GM23248 (cell line): ENCODE measurements at regions of chr1 and their contacts with region 1.

Region 1: DNA sequence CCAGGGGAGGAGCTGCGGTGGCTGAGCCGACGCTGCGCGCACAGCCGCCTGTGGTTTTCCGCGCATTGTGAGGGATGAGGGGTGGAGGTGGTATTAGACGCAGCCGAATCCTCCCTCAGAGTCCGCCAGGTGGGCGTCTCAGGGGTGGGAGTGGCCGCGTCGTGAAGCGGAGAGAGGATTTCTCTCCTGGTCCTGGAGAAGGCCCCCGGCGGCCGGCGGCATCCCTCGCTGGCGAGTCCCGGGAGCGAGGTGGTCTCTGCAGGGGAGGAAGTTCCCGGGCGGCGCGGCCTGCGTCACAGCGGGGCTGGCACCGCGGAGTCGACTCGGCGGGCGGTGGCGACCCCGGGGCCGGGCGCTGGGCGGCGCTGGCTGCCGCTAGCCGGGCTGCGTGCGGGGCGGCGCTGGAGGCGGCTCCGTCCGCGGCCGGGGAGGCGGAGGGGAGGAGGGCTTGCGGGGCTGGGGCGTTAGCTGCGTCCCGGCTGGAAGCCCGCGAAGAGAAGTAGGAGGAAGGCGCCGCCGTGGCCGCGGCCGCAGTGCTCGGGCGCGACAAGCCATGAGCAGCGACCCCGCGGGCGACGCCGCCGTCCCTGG is at the start of gene LRRC8C:
- DNase-seq: peak; percentile 91
- H3K4me3 ChIP-seq: peak within 1 kb of the TSS; percentile 90
- H3K27ac ChIP-seq: peak within 1 kb of the TSS; percentile 21
- H3K4me1 ChIP-seq: peaks cover 32% of the 10 kb centered on the region
- H3K27me3 ChIP-seq: no peaks in the 10 kb centered on the region
- total RNA-seq, gene LRRC8C: 5.7 and 7.3 TPM in 2 replicates

Region 2: DNA sequence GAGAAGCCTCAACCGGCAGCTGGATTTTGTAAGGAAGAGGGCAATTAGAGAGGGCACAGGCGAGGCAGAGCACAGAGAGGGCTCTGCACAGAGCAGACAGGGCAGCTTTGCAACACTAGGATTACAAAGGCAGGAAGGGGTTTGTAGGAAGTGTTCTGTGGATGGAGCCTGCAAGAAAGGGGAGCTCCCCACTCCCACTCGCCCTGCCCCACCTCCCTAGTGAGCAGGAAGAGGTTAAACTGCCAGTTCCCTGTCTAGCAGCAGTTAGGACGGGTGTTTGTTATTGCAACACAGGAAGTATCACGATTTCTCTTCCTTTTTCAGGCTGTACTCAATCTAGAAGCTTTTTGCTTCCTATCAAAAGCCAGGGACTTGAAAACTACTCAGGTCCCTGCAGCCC is 124.8 kb after region 1 on chr1:
- in situ Hi-C with region 1: loop called (anchors 5 kb)
- DNase-seq: no peak
- H3K4me3 ChIP-seq: no peak overlapping the region
- H3K27ac ChIP-seq: no peak overlapping the region
- H3K4me1 ChIP-seq: peaks cover 27% of the 10 kb centered on the region
- H3K27me3 ChIP-seq: no peaks in the 10 kb centered on the region

Region 3: DNA sequence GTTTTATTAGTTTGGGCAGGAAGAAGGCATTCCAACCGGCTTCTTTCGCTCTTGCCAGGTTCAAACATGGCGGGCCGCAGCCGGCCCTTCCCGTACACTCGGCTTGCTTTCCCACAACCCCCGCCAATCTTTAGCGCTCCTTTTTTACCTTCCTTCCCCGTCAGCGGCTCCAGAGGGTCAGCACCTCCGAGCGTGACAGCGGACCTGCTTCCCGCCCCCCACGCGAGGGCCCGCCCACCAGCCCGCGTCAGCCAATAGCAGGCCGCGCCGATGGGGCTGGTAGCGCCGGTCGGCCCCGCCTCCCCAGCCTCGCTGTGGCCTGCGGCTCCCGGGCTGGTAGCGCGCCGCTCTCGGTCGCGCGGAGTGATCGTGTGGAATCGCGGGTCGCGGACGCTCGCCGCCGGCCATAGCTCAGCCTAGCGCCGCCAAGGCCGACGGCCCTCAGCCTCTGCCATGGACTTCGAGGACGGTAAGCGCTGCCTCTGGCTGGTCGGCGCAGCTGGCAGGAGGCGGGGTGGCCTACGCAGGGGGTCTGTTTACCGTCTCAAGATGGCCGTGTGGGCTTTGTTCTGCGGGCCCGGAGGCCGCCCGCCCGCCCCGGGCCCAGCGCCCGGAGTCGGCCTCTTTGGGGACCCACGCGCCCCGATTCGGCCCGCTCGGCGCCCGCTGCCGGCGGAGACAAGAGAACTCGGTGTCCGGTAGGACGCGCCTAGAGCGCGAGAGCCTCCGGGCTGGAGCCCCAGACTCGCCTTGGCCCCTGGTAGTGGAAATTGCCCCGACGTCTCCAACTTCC is 362.2 kb after region 1 on chr1 and contains the start of gene ZNF326:
- in situ Hi-C with region 1: loop called (anchors 25 kb)
- DNase-seq: peak; percentile 97
- H3K4me3 ChIP-seq: peak within 1 kb of the TSS; percentile 94
- H3K27ac ChIP-seq: peak within 1 kb of the TSS; percentile 89
- H3K4me1 ChIP-seq: peaks cover 35% of the 10 kb centered on the region
- H3K27me3 ChIP-seq: no peaks in the 10 kb centered on the region
- total RNA-seq, gene ZNF326: 5.2 and 5.6 TPM in 2 replicates